PC-9 (cell line): ENCODE measurements at regions of chr6 and their contacts with region 1.

Region 1: GRCh38 chr6:122696079-122696478 is 83.4 kb upstream of the FABP7 start:
- DNase-seq: peak in 1 of 2 experiments; percentile 77
- H3K4me3 ChIP-seq: peak overlapping the region; percentile 12; the same call in 1 of the 2 replicates
- H3K27ac ChIP-seq: peak overlapping the region; percentile 96
- H3K4me1 ChIP-seq: peaks cover 58% of the 10 kb centered on the region
- H3K27me3 ChIP-seq: no peaks in the 10 kb centered on the region
- CTCF ChIP-seq: no peak

Region 2: GRCh38 chr6:122653094-122653493 is 43.0 kb before region 1 on chr6:
- CTCF ChIA-PET with region 1: no interaction called
- POLR2A ChIA-PET with region 1: no interaction called
- intact Hi-C with region 1: loop called (anchors 2 kb)
- DNase-seq: peak; percentile 15 to 94
- H3K4me3 ChIP-seq: peak overlapping the region; percentile 14; the same call in 1 of the 2 replicates
- H3K27ac ChIP-seq: peak overlapping the region; percentile 94
- H3K4me1 ChIP-seq: peaks cover 58% of the 10 kb centered on the region
- H3K27me3 ChIP-seq: no peaks in the 10 kb centered on the region
- CTCF ChIP-seq: no peak